ENCODE measurements at regions of chr4 and their contacts with region 1.

Region 1: DNA sequence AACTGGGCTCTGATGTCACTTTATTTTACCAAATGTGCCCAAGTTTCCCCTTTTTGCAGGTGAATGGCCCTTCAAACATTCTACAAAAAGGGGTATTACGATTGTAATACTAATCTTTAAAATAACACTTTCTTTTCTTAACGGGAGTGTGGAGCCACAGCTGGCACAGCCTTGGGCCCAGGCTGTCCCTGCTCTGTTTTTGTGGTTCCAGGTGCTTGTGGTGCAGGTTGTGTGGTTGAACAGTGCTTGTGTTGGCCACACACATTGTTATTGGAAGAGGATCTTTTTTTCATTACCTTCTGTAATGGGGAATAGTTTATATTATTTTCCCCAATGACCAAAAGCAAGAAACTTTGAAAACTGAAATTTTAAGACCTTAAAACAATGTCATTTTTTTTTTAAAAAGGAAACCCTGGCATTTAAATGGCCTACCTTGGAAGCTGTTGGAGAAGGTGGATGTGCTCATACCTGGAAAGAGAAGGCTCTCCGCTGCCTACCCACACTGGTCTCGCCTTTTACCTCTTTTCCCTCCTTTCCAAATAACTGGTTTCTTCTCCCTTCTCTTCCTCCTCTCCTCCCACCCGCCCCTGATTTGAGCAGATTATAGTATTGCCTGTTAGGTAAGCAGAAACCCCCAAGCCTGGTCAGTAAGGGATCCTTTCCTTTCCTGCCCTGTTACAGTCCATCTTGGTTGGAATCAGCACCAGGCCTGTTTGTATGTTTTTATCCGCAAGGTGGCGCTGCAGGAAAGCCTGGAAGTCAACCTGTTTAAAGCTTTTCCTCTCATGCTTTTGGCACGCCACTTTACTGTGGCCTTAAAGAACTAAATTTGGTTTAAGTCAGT is 28.6 kb downstream of the HADH start:
- DNase-seq: peak; percentile 74
- H3K4me3 ChIP-seq: no peak overlapping the region
- H3K27ac ChIP-seq: peak overlapping the region; percentile 2
- H3K4me1 ChIP-seq: peaks cover 30% of the 10 kb centered on the region
- H3K27me3 ChIP-seq: no peaks in the 10 kb centered on the region
- CTCF ChIP-seq: peak; percentile 91

Region 2: DNA sequence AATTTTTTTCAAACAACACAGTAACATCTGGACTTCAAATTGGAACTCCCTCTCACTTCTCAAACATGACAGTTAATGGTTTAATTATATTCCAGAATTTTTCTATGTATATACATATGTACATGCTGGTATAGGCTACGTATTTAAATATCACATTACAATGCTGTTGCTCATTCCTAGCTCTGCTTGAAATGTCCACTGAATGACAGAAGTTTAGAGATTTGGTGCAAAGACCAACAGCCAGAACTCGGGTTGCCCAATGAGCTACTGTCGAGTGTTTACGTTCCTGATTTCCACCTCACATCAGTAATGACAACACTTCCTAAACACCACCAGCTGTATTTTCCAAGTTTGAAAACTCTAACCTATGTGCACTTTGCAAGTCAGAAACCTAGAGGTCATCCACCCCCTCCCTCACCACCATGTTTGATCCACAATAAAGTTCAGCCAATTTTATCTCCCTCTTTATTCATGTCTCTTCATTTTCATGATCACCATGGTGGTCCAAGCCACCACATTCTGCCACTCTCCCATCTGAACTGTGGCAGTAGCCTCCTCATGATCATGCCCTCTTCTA is 552.8 kb after region 1 on chr4:
- intact Hi-C with region 1: loop called (anchors 10 kb)
- DNase-seq: no peak
- H3K4me3 ChIP-seq: no peak overlapping the region
- H3K27ac ChIP-seq: no peak overlapping the region
- H3K4me1 ChIP-seq: peaks cover 4% of the 10 kb centered on the region
- H3K27me3 ChIP-seq: no peaks in the 10 kb centered on the region
- CTCF ChIP-seq: no peak